ENCODE measurements at regions of chr20 and their contacts with region 1.

Region 1: GRCh38 chr20:43456809-43457639 is 672 bp upstream of the SRSF6 start:
- DNase-seq: peak; percentile 85 to 91
- ATAC-seq: peak; percentile 84 to 92 (median 87)
- H3K4me3 ChIP-seq: peak overlapping the region; percentile 82
- H3K27ac ChIP-seq: peak overlapping the region; percentile 98
- H3K4me1 ChIP-seq: peaks cover 10% of the 10 kb centered on the region
- H3K27me3 ChIP-seq: no peaks in the 10 kb centered on the region
- CTCF ChIP-seq: no peak

Region 2: DNA sequence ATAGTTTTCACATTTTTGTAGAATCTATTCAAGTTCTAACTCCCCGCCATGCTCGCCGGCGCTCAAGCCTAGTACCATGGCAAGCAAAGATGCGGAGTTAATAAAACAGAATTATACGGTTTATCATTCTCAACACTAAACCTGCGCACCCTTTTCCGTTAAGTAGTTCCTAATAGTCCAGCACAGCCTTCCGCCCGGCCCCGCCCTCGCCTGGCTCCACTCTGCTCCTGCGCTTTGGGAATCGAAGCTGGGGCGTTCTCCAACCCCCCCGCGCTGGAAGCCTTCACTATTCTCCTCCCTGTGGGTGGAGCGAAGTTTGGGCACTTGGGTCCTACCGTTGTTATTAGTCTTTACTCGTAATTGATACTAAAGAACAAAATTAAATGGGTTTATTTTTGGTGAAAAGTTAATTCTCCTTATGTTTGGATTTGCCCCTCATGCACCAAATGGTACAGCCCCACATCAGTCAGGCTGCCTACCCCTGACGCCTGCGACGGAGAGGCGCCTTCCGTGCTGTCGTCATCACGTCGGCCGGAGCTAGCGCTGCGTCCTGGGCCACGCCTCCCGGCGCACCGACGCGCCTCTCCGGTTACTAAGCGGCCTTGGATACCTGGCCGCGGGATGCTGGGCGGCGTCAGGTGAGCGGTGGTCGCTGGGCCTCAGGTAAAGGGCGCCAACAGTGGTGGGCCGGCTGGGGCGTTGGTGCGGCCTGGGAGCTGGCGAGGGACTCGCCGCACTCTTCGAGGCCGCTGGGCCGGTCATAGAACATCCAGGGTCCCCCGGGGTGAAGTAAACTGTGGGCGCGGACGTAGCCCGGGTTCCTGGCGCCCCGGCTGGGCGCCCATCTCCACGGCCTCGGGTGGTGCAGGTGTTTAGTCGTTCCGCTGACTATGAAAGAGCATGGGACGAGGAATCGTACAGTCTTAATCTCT is 133.6 kb after region 1 on chr20 and contains the start of gene IFT52:
- intact Hi-C with region 1: loop called (anchors 5 kb)
- DNase-seq: peak; percentile 92 to 96
- ATAC-seq: peak; percentile 99 to 100 (median 100)
- H3K4me3 ChIP-seq: peak within 1 kb of the TSS; percentile 89
- H3K27ac ChIP-seq: peak within 1 kb of the TSS; percentile 79
- H3K4me1 ChIP-seq: peaks cover 5% of the 10 kb centered on the region
- H3K27me3 ChIP-seq: no peaks in the 10 kb centered on the region
- CTCF ChIP-seq: no peak
- total RNA-seq, gene IFT52: 2.5 to 5.3 (median 3.7) TPM

Measured in psoas muscle (tissue), 8 donors.